ENCODE measurements at regions of chr3 and their contacts with region 1.

Region 1: DNA sequence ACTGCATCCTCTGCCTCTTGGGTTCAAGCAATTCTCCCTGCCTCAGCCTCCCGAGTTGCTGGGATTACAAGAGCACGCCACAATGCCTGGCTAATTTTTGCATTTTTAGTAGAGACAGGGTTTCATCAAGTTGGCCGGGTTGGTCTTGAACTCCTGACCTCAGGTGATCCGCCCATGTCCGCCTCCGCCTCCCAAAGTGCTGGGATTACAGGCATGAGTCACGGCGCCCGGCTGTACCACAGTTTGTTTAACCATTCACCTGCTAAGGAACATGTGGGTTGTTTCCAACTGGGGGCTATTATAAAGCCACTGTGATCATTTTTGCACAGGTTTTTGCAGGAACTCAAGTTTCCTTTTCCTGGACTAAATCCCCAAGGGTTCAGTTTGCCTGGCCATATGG is 123.2 kb upstream of the RAP2B start:
- DNase-seq: peak; percentile 24
- H3K4me3 ChIP-seq: no peak overlapping the region
- H3K27ac ChIP-seq: no peak overlapping the region
- H3K4me1 ChIP-seq: peaks cover 10% of the 10 kb centered on the region
- H3K27me3 ChIP-seq: no peaks in the 10 kb centered on the region

Region 2: DNA sequence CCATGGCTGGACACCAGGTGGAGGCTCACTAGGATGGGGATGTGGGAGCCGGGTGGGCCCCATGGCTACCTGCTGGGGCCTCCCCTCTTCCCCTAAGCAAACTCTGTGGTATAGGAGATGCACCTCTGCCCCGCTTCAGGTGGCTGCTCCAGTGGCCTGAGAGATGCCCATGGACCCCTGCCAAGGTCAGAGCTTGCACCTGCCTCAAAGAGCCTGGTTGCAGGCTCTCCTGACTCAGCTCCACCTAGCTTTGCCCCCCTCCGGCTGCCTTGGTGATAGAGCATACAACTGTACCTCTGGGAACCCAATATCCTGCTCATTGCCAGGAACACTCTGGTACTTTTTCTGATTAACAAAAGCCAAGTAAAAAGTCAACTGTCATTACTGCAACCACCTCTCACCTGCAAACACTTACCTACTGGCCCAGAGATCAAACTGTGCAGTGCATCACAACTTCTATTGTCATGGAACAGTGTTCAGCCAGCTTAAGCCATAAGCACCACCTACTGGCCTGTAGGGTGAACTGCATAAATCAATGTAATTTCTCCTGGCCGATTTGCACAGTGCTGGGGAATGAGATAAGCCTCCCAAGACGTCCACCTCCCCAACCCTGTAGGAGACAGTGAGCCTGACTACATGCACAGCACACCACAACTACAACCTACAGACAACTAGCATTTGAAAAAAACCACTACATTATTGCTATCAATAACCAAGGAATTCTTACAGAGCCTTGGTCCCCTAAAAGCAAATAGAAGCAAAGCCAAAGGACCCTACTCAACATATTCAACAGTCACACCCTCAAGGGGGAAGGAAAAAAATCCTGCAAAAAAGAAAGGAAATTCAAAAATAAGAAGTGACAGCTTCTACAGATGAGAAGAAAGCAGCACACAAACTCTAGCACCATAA is 730.0 kb after region 1 on chr3:
- in situ Hi-C with region 1: loop called (anchors 10 kb)
- DNase-seq: peak; percentile 70
- H3K4me3 ChIP-seq: no peak overlapping the region
- H3K27ac ChIP-seq: no peak overlapping the region
- H3K4me1 ChIP-seq: no peaks in the 10 kb centered on the region
- H3K27me3 ChIP-seq: no peaks in the 10 kb centered on the region